Heart right ventricle (tissue), 16 donors: ENCODE measurements at regions of chr11 and their contacts with region 1.

Region 1: DNA sequence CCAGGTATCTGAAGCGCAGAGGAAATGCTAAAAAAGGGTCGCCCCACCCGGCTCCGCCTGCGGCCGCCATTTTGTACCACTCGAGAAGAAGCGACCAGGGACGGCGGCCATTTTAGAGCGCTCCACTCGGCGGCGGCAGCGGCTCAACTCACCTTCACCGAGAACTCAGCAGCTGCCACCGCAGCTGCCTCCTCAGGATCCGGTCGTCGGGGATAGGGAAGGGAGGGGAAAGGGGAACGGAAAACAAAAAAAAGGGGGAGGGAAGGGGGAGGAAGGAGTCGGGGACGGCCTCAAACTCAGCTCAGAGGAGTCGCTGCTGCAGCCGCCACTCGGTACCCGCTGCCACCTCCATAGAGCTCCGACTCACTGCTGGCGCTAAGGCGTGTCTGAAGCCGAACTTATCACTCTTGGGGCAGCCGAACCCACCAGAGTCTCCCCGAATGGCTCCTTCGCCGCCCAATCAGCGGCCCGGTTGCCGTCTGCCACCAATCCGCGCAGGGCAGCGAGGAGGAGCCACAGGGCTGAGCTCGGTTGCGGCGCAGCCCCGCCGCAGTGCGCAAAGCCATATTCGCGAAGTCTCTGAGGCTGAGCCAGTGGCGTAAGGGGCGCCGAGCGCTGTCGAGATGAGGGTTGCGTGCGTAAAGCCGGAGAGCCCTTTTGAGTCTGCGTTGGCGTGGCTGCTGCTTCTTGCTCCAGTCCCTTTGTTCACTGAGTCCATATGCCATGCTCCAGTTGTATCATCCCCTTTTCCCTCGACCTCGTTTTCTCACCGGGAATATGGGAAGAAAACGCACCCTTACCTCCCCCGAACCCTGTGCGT is at the start of gene EIF4G2:
- DNase-seq: peak; percentile 98
- ATAC-seq: peak; percentile 95 to 98 (median 98)
- H3K4me3 ChIP-seq: peak within 1 kb of the TSS; percentile 76 to 98 (median 92)
- H3K27ac ChIP-seq: peak within 1 kb of the TSS; percentile 89 to 100 (median 100)
- H3K4me1 ChIP-seq: peaks cover 0 to 50% (median 40%) of the 10 kb centered on the region in 9 donors
- H3K27me3 ChIP-seq: no peaks in the 10 kb centered on the region
- CTCF ChIP-seq: no peak
- total RNA-seq, gene EIF4G2: 623 to 1,076 (median 970) TPM

Region 2: GRCh38 chr11:10770626-10771254 is 38.0 kb before region 1 on chr11:
- intact Hi-C with region 1: loop called in 2 of 10 experiments (anchors 5 kb)
- DNase-seq: peak; percentile 47 to 67
- ATAC-seq: peak in 7 of 8 donors; percentile 39 to 81 (median 75)
- H3K4me3 ChIP-seq: no peak overlapping the region
- H3K27ac ChIP-seq: peak overlapping the region in 8 of 10 donors; percentile 33 to 75 (median 58)
- H3K4me1 ChIP-seq: peaks cover 0 to 31% (median 10%) of the 10 kb centered on the region in 9 donors
- H3K27me3 ChIP-seq: no peaks in the 10 kb centered on the region
- CTCF ChIP-seq: peak; percentile 37 to 85 (median 72)

Region 3: GRCh38 chr11:10792398-10792975 is 16.3 kb before region 1 on chr11:
- intact Hi-C with region 1: loop called in 1 of 10 experiments (anchors 1 kb)
- DNase-seq: peak; percentile 88 to 92
- ATAC-seq: peak; percentile 93 to 96 (median 94)
- H3K4me3 ChIP-seq: peak overlapping the region in 5 of 10 donors; percentile 7 to 32 (median 28)
- H3K27ac ChIP-seq: no peak overlapping the region
- H3K4me1 ChIP-seq: peaks cover 0 to 25% (median 6%) of the 10 kb centered on the region in 9 donors
- H3K27me3 ChIP-seq: no peaks in the 10 kb centered on the region
- CTCF ChIP-seq: peak; percentile 84 to 97 (median 93)

Region 4: DNA sequence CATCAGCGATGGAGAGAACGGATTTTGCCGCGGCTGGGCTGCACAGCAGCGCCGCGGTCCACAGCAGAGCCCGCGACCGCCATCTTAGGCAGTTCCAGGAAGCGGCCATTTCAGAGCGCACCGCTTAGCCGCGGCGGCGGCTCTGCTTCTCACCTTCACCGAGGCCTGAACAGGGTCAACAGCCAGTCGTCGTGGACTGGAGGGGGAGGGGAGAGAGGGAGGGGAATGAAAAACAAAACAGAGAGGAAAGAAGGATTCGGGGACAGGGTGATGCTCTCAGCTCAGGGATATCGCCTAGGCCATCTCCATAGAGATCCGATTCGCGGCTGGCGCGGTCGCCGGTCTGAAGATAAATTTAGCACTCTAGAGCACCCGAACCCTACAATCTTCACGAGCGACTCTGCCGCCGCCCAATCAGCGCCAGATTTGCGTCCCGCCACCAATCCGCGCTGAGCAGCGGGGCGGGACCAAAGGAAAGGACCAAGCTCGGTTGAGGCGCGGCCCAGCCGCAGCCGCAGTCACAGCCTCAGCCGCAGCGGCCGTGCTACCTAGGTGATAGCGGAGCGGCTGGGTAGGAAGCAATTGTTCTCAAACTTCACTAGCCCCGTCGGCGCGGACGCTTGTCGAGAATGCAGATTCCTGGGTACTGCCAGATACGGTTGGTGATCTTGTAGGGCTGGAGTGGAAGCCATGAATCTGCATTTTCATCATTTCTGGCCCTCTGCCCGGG is 49.1 kb after region 1 on chr11 and contains the start of gene ZBED5:
- intact Hi-C with region 1: loop called in 9 of 10 experiments (anchors 1 to 10 kb)
- DNase-seq: peak; percentile 97
- ATAC-seq: peak; percentile 96 to 98 (median 97)
- H3K4me3 ChIP-seq: peak within 1 kb of the TSS; percentile 70 to 89 (median 84)
- H3K27ac ChIP-seq: peak within 1 kb of the TSS; percentile 90 to 99 (median 98)
- H3K4me1 ChIP-seq: peaks cover 0 to 57% (median 26%) of the 10 kb centered on the region in 9 donors
- H3K27me3 ChIP-seq: no peaks in the 10 kb centered on the region
- CTCF ChIP-seq: peak in 7 of 9 donors; percentile 8 to 41 (median 20)
- total RNA-seq, gene ZBED5: 31.4 to 46.3 (median 39.6) TPM

Region 5: GRCh38 chr11:10906513-10906912 is 97.8 kb after region 1 on chr11:
- intact Hi-C with region 1: loop called in 5 of 10 experiments (anchors 2 to 5 kb)
- DNase-seq: no peak
- ATAC-seq: peak in 7 of 8 donors; percentile 9 to 66 (median 41)
- H3K4me3 ChIP-seq: no peak overlapping the region
- H3K27ac ChIP-seq: no peak overlapping the region
- H3K4me1 ChIP-seq: peaks cover 0 to 29% (median 9%) of the 10 kb centered on the region in 9 donors
- H3K27me3 ChIP-seq: no peaks in the 10 kb centered on the region
- CTCF ChIP-seq: peak in 6 of 9 donors; percentile 21 to 54 (median 34)

Region 6: DNA sequence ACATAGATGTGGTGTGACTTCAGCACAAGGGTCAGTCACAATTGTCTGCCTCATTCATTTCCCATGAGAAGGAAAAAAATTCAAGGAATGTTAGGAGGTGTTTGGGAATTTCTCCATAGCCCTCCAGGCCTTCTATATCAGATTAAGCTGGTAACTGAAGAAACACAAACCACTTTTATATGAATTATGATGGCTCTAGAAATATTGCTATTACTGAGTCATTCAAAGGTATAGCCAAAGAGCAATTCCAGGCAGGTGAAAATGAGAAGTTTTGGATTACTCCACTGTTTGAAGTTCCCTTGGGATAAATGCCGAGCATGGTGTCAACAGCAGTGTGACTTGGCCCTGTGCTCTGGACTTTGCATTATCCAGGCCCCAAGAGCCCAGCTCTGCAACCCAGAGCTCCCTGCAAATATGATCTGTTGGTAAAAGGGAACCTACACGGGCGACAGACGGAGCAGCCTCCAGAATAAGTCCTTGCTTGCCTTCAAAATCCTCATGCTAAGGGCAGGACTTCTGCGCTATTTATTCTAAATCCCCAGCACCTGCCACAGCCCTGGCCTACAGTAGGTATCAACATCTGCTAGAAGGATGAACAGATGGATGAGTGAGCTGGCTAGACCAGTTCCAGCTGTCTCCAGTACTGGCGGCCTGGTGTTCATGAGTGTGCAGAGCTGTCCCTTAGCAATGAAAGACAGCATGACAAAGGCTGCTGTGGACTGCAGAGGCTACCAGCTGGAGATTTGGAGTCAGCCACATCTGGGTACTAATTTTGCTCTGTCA is 116.6 kb after region 1 on chr11:
- intact Hi-C with region 1: loop called in 3 of 10 experiments (anchors 1 to 10 kb)
- DNase-seq: no peak
- ATAC-seq: peak in 2 of 8 donors; percentile 31 to 39
- H3K4me3 ChIP-seq: no peak overlapping the region
- H3K27ac ChIP-seq: peak overlapping the region in 1 of 10 donors; percentile 17
- H3K4me1 ChIP-seq: peaks cover 0 to 27% (median 5%) of the 10 kb centered on the region in 9 donors
- H3K27me3 ChIP-seq: peaks cover 0 to 11% (median 0%) of the 10 kb centered on the region in 7 donors
- CTCF ChIP-seq: no peak

Region 7: DNA sequence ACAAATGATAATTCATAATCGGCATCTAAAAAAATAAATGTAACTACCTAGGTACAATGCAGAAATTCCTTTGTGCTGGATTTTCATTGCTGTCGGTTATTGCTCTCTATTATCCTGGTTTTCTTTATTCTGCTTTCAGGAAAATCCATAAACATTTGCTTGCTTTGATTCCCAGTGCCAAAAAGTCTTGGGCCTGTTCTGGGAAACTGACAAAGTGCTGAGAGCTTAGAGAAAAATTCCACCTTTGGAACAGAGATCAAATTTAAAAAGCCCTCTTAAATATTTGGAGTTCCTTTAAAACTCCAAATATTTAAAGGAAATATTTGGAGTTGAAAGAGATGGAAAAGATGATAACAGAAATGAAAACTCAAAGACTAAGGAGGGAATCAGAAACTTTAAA is 136.4 kb after region 1 on chr11:
- intact Hi-C with region 1: no loop called
- DNase-seq: no peak
- ATAC-seq: no peak
- H3K4me3 ChIP-seq: no peak overlapping the region
- H3K27ac ChIP-seq: no peak overlapping the region
- H3K4me1 ChIP-seq: peaks cover 0 to 9% (median 0%) of the 10 kb centered on the region in 9 donors
- H3K27me3 ChIP-seq: no peaks in the 10 kb centered on the region
- CTCF ChIP-seq: no peak